WTC11 (cell line): ENCODE measurements at regions of chr2 and their contacts with region 1.

Region 1: GRCh38 chr2:232521959-232522622 is 1.9 kb downstream of the PRSS56 start:
- DNase-seq: peak; percentile 71
- ATAC-seq: peak; percentile 14
- H3K4me3 Mint-ChIP-seq: 0 out of 2 replicates have a peak overlapping the region, but pooled peaks have one; percentile 37
- H3K27ac Mint-ChIP-seq: no peak overlapping the region
- H3K4me1 Mint-ChIP-seq: peaks cover 6% of the 10 kb centered on the region; the same call in 1 of the 2 replicates
- H3K27me3 Mint-ChIP-seq: peaks cover 38% of the 10 kb centered on the region
- CTCF ChIP-seq: peak; percentile 96

Region 2: DNA sequence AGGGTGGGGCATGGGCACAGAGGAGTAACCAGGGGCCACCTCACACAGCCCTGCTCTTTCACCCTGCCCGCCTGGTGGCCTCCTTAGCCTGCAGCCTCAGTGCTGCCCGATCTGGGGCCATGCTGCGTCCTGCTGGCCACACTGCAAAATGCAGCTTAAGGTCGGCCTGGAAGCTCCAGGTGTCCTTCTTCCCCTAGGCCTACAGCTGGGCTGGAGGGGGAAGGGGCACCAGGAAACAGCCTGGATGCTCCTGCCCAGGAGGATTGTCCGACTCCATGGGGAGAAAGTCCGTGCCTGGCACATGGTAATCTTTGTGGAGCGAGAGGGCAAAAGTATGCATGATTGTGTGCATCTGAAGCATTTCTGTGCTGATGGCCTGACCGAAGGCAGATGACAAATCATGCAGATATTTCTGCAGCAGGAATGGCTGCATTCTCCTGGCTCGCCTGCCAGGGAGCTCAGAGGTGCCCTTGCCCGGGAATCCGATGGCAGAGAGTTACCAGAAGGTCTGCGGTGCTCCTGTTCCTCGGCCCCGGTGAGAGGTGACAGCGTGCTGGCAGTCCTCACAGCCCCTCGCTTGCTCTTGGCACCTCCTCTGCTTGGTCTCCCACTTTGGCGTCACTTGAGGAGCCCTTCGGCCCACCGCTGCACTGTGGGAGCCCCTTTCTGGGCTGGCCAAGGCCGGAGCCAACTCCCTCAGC is 156.3 kb before region 1 on chr2:
- CTCF ChIA-PET with region 1: interaction called, 51 read pairs
- POLR2A ChIA-PET with region 1: no interaction called
- DNase-seq: peak; percentile 71
- ATAC-seq: peak; percentile 75
- H3K4me3 Mint-ChIP-seq: no peak overlapping the region
- H3K27ac Mint-ChIP-seq: no peak overlapping the region
- H3K4me1 Mint-ChIP-seq: peaks cover 16% of the 10 kb centered on the region
- H3K27me3 Mint-ChIP-seq: no peaks in the 10 kb centered on the region; the same call in 1 of the 2 replicates
- CTCF ChIP-seq: peak; percentile 40

Region 3: DNA sequence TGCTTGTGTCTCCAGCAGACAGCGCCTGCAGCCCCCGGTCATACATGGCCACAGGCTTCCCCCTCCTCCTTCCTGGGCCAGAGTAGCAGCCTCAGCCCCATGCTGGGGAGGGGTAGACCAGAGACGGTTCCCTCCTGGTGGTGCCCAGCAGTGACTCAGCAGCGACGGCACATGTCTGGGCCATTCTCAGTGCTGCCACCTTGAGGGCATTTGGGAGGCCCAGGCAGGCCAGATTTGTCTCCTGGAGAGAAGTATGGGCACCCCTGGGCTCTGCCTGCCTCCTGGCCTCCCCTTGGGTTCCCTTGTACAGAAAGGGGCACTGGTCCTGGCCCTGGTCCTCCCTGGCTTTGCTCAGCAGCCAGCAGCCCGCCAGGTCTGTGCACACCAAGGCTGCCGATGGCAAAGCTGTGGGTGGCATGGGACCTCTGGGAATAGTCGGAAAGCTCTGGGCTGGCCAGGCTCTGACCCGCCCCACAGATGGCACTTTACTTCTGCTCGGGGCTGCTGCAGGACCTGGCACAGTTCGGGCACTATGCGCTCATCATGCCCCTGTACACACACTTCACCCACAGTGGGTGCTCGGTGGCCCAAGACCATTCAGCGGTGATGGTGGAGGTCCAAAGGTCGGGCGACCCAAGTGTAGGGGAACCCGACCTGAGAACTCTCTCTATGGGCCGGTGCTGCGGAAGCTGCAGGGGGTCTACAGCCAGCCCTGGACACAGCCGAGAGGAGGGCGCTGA is 77.5 kb before region 1 on chr2:
- CTCF ChIA-PET with region 1: interaction called, 104 read pairs
- POLR2A ChIA-PET with region 1: interaction called, 3 read pairs
- DNase-seq: peak; percentile 71
- ATAC-seq: peak; percentile 15
- H3K4me3 Mint-ChIP-seq: no peak overlapping the region
- H3K27ac Mint-ChIP-seq: no peak overlapping the region
- H3K4me1 Mint-ChIP-seq: peaks cover 6% of the 10 kb centered on the region
- H3K27me3 Mint-ChIP-seq: no peaks in the 10 kb centered on the region; the same call in 1 of the 2 replicates
- CTCF ChIP-seq: peak; percentile 42

Region 4: DNA sequence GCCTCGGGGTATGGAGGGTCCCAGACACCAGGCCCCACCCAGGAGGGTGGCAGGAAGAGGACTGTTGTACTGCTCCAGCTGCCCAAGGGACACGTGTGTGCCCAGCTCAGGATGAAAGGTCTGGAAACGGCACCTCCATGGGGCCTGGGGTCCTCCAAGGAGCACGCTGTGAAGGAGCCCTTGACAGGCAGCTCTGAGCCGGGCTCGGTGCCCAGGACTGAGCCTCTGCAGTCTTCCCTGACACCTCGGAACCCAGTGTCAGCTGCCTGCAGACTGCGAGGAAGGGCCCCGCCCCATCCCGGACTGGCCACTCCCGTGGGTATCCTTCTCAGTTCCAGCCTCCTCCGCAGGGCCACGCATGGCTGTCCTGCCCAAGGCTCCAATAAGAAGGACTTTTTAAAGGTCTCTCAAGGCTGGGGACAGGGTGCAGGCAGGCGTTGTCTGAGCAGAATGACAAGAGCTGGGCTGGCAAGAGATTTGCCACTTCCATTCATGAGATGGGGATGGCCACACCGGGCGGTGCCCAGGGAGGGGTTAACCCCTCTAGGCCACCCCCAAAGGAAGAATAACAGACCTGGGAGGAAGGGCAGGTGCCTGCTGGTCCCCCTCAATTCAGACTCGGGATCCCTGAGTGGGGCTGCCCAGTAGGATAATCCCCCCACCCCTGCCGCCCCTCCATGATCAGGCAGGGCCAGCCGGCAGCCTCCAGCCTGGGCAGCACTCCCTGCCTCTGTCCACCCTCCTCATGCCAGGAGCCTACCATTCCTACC is 43.3 kb before region 1 on chr2:
- CTCF ChIA-PET with region 1: interaction called, 23 read pairs
- POLR2A ChIA-PET with region 1: no interaction called
- DNase-seq: no peak
- ATAC-seq: no peak
- H3K4me3 Mint-ChIP-seq: no peak overlapping the region
- H3K27ac Mint-ChIP-seq: no peak overlapping the region
- H3K4me1 Mint-ChIP-seq: peaks cover 4% of the 10 kb centered on the region
- H3K27me3 Mint-ChIP-seq: peaks cover 9% of the 10 kb centered on the region
- CTCF ChIP-seq: no peak

Region 5: DNA sequence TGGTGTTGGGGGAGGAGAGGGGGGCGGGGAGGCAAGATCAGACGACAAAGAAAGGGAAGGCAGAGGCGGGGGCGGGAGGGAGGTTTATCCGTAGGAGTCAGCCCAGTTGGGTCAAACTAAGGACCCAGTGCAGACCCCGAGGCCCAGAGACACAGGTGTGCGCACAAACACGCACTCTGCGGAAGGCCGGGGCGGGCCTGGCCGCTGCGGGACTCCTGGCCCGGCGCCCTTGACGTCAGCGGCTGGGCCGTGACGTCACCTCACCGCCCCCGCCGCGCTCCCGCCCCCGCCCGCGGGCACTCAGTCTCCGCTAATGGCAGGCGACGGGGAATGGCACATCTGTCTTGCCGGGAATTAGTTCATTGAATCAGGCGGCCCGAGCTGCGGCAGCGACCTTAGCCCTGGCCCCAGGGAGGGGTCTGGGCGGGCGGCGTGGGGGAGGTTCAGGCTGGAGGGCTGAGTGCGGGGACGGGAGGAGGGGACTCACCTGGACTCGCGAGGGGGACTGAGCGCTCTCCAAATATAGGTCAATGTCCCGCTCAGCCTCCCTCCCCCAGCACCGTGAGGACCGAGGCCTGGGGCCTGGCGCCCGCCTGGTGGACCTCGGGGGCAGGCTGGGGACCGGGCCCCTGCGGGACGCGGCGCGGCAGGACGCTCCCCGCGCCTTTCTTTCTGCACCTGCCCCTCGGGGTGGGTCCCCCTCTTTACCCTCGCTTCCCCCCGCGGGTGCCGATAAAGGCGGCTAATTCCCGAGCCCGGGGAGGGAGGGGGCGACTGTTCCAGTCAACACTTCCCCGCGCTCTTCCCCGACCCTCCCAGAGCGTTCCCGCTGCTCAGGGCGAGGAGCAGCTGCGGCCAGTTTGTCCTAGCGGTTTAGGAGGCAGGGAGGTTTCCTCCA is 18.9 kb before region 1 on chr2:
- CTCF ChIA-PET with region 1: interaction called, 73 read pairs
- POLR2A ChIA-PET with region 1: interaction called, 4 read pairs
- DNase-seq: peak; percentile 67
- ATAC-seq: peak; percentile 29
- H3K4me3 Mint-ChIP-seq: peak overlapping the region; percentile 95
- H3K27ac Mint-ChIP-seq: no peak overlapping the region
- H3K4me1 Mint-ChIP-seq: peaks cover 22% of the 10 kb centered on the region
- H3K27me3 Mint-ChIP-seq: peaks cover 53% of the 10 kb centered on the region
- CTCF ChIP-seq: no peak

Region 6: DNA sequence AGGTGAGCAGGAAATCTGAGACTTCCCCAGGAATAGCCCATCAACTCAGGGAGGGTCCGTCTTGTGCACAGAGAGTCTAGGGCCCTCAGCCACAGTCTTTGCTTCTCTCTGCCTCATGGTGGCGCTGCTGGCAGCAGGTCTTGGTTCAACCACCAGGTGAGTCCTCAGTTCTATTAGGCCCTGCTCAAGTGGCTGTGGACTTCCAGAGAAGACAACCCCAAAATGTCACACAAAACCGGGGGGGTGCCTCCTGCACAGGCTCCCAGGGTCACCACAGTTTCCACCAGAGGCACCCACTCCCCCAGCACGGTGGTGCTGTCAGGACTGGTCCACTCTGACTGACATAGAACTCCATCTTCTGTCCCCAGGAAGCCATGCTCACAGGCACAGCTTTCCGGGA is 15.0 kb after region 1 on chr2:
- CTCF ChIA-PET with region 1: interaction called, 42 read pairs
- POLR2A ChIA-PET with region 1: interaction called, 4 read pairs
- DNase-seq: peak; percentile 73
- ATAC-seq: peak; percentile 75
- H3K4me3 Mint-ChIP-seq: no peak overlapping the region
- H3K27ac Mint-ChIP-seq: no peak overlapping the region
- H3K4me1 Mint-ChIP-seq: peaks cover 25% of the 10 kb centered on the region
- H3K27me3 Mint-ChIP-seq: peaks cover 15% of the 10 kb centered on the region
- CTCF ChIP-seq: peak; percentile 67

Region 7: GRCh38 chr2:232731470-232731869 is 209.4 kb after region 1 on chr2:
- CTCF ChIA-PET with region 1: no interaction called
- POLR2A ChIA-PET with region 1: no interaction called
- DNase-seq: no peak
- ATAC-seq: no peak
- H3K4me3 Mint-ChIP-seq: no peak overlapping the region
- H3K27ac Mint-ChIP-seq: no peak overlapping the region
- H3K4me1 Mint-ChIP-seq: no peaks in the 10 kb centered on the region
- H3K27me3 Mint-ChIP-seq: no peaks in the 10 kb centered on the region
- CTCF ChIP-seq: no peak